ENCODE measurements at regions of chr7 and their contacts with region 1.

Region 1: GRCh38 chr7:77606562-77606961 is 69.5 kb downstream of the PTPN12 start:
- DNase-seq: no peak
- H3K4me3 ChIP-seq: no peak overlapping the region
- H3K27ac ChIP-seq: no peak overlapping the region
- H3K4me1 ChIP-seq: no peaks in the 10 kb centered on the region
- H3K27me3 ChIP-seq: no peaks in the 10 kb centered on the region
- CTCF ChIP-seq: no peak
- POLR2A ChIP-seq: no peak

Region 2: GRCh38 chr7:77587272-77587671 is 19.3 kb before region 1 on chr7:
- intact Hi-C with region 1: loop called (anchors 2 kb)
- DNase-seq: no peak
- H3K4me3 ChIP-seq: no peak overlapping the region
- H3K27ac ChIP-seq: no peak overlapping the region
- H3K4me1 ChIP-seq: no peaks in the 10 kb centered on the region
- H3K27me3 ChIP-seq: no peaks in the 10 kb centered on the region
- CTCF ChIP-seq: no peak
- POLR2A ChIP-seq: no peak